ENCODE measurements at regions of chr3 and their contacts with region 1.

Region 1: DNA sequence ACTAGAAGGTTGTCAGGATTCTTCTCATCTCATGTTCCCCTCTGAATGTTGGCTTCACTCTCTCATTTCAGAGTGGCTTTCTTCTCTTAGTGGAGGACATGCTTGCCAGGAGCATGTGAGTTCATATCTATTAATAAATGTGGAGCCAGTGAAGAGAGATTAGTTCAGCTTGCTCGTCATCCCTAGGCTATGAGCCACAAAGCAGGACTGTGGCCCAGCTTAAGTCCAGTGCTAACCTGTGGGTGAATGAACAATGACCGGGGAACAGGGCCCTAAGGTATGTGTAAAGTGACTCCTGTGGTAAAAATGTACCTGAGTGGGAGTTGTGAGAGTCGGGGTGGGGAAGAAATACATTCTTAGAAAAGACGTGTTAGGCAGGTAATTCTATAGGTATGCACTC is 96.9 kb upstream of the TBL1XR1 start:
- DNase-seq: peak; percentile 96
- H3K4me3 ChIP-seq: no peak overlapping the region
- H3K27ac ChIP-seq: peak overlapping the region; percentile 98
- H3K4me1 ChIP-seq: peaks cover 23% of the 10 kb centered on the region
- H3K27me3 ChIP-seq: no peaks in the 10 kb centered on the region
- CTCF ChIP-seq: no peak

Region 2: DNA sequence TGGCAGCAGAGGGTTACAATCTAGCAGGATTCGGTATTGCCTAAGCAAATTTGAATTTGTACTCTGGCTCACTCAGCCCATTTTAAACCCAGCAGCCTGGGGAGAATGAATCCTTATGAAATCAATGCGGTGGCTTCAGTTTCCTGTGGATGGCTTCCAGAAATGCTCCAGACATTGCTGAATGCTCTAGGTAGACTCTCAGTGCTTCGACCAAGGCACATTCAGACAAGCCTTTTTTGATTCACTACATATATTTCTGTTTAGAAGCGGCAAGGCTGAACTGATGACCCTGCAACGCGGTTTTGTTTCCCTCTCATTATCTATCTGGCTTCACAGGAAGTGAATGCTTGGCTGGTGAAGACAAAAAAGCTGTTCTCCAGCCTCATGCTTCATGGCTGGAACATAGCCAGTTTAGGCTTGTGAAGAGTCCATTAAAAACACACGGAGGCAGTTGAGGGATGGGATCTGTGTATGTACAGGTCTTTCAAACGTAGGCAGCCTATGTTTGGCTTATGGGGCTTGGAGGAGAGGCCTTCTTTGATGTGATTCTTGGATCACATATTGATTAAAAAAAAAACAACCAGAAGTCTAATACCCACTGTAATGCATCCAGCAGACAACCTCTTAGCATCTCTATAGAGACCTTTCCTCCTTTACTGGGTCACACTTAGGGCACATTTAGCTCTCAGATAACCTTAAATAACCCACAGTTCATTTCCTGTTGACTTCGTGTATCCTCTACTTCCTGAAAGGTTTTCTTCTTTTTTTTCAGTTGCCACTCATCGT is 303.3 kb after region 1 on chr3:
- CTCF ChIA-PET with region 1: no interaction called
- dilution Hi-C with region 1: no loop called
- in situ Hi-C with region 1: no loop called
- intact Hi-C with region 1: loop called (anchors 5 kb)
- DNase-seq: peak; percentile 91
- H3K4me3 ChIP-seq: no peak overlapping the region
- H3K27ac ChIP-seq: peak overlapping the region; percentile 89
- H3K4me1 ChIP-seq: peaks cover 77% of the 10 kb centered on the region
- H3K27me3 ChIP-seq: no peaks in the 10 kb centered on the region
- CTCF ChIP-seq: no peak